A673 (cell line): ENCODE measurements at regions of chr6 and their contacts with region 1.

Region 1: GRCh38 chr6:43713643-43714310 is 26.2 kb upstream of the MRPS18A start:
- DNase-seq: no peak
- H3K4me3 ChIP-seq: no peak overlapping the region
- H3K27ac ChIP-seq: peak overlapping the region; percentile 74
- H3K4me1 ChIP-seq: peaks cover 47% of the 10 kb centered on the region
- H3K27me3 ChIP-seq: no peaks in the 10 kb centered on the region
- CTCF ChIP-seq: no peak

Region 2: DNA sequence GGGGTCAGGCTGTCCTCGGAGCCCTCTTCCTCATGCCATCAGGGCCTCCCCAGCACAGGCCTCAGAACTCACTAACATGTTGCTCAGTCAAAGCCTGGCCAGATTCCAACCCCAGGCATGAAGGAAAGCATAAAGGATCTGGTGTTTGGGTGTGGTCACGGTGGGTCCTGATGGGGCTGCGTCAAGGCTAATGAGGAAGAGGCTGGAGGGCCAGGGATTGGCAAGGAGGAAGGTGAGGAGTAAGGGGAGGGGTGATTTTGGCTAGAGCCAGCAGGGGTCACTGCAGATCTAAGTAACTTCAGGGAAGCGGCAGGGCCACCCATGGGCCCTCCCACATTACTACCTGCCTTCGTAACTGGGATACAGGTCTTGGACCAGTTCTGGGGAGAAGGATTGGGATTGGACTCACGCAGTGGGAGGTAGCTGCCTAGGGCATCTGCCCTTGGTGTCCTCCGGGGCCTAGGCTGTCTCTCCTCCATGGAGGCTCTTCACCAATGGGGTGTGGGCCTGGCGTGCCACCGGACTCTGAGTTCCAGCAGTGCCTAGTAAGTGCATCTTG is 10.0 kb after region 1 on chr6:
- CTCF ChIA-PET with region 1: no interaction called
- POLR2A ChIA-PET with region 1: interaction called, 13 read pairs
- intact Hi-C with region 1: no loop called
- DNase-seq: peak; percentile 73
- H3K4me3 ChIP-seq: no peak overlapping the region
- H3K27ac ChIP-seq: peak overlapping the region; percentile 36
- H3K4me1 ChIP-seq: peaks cover 21% of the 10 kb centered on the region
- H3K27me3 ChIP-seq: no peaks in the 10 kb centered on the region
- CTCF ChIP-seq: peak; percentile 78